Panc1 (cell line): ENCODE measurements at regions of chr2 and their contacts with region 1.

Region 1: DNA sequence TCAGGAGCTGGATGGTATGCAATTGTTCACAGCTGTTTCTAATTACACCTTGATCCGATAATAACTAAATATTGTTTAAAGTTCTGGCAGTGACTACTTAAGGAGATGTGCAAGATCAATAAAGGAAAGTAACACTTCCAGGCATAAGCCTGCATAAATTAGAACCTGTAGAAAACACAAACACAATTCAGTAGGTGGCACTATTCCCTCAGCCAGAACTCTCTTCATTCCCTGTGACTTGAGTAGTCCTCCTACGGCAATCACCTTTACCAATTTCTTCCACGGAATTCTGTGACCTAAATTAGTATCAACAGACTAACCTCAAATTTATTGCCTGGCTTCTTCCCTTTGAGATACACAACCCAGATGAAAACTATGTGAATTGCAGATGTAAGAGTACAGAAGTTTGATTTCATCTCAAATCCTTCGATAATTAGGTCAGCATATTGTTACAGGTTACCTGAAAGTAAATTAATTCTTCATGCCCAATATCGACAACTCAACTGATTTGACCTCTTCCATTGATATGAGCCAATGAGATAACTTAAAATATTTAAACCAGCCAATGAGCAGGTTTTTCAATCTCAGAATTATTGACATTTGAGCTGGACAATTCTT is 137.8 kb downstream of the PID1 start:
- DNase-seq: peak; percentile 39
- ATAC-seq: peak; percentile 77; the same call in 1 of the 2 replicates
- H3K4me3 ChIP-seq: no peak overlapping the region
- H3K27ac ChIP-seq: no peak overlapping the region
- H3K4me1 ChIP-seq: peaks cover 5% of the 10 kb centered on the region; the same call in 1 of the 2 replicates
- H3K27me3 ChIP-seq: no peaks in the 10 kb centered on the region; the same call in 1 of the 2 replicates
- CTCF ChIP-seq: peak; percentile 67; the same call in 1 of the 2 replicates

Region 2: DNA sequence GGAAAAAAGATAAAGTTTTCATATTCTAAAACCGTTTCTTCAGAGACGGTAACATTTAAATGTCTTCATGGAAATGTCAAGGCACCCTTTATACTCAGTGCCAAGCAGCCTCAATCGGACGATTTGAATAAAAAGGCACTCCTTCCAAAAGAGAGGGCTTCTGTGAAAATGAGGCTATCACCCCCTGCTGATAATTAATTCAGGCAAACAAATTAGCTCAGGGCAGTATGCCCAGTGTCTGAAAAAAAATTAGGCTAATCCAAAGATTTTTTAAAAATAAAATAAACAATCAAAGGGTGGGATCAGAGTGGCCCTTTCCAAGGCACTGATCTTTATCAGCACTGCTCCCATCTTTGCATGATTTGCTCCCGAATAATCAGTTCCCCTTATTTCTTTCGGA is 288.8 kb after region 1 on chr2:
- CTCF ChIA-PET with region 1: no interaction called
- POLR2A ChIA-PET with region 1: no interaction called
- in situ Hi-C with region 1: no loop called
- intact Hi-C with region 1: loop called (anchors 10 kb)
- DNase-seq: no peak
- ATAC-seq: no peak
- H3K4me3 ChIP-seq: no peak overlapping the region
- H3K27ac ChIP-seq: no peak overlapping the region
- H3K4me1 ChIP-seq: no peaks in the 10 kb centered on the region
- H3K27me3 ChIP-seq: no peaks in the 10 kb centered on the region
- CTCF ChIP-seq: no peak